Activated T-helper 2 cell treated with anti-CD3 and anti-CD28 coated beads, Interferon-gamma antibody, Interleukin-2, Interleukin-4, amounts not matched to agents 10 μg/mL and 5 μg/mL and 100 μg/mL, durations not matched to agents 14 hours and 24 hours and 36 hours (primary cell): ENCODE measurements at regions of chr3 and their contacts with region 1.

Region 1: DNA sequence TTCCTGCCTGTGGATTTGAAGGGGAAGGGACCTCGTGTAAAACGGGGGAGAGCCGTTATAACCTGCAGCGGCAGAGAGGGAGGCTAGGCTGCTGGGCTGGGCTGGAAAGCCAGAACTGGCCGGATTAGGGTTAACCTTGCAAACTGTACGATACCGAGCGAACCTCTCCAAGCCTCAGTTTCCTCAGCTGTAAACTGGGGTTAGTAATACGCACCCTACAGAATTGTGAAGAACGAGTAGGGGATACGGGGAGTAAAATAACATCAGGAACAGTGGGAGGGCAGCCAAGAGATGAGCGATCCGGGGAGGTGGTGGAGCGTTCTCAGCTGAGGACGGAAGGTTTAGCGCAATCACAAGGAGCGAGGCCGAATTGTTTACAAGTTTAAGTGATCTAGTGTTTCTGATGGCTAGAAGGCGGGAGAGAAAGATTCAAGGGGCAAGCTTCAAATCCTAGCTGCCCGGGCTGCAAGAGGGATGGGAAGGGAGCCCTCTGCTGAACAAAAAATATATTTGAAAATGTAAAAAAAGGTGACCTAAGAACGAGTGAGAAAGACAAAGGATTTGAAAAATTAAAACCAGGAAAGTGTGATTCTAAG is 768 bp upstream of the SEMA5B start:
- DNase-seq: no peak
- H3K4me3 Mint-ChIP-seq: peak overlapping the region; percentile 59
- H3K27ac Mint-ChIP-seq: no peak overlapping the region
- H3K4me1 Mint-ChIP-seq: peaks cover 11% of the 10 kb centered on the region
- H3K27me3 Mint-ChIP-seq: peaks cover 53% of the 10 kb centered on the region

Region 2: GRCh38 chr3:122942937-122943827 is 85.1 kb before region 1 on chr3:
- intact Hi-C with region 1: loop called (anchors 2 kb)
- DNase-seq: peak; percentile 15
- H3K4me3 Mint-ChIP-seq: no peak overlapping the region
- H3K27ac Mint-ChIP-seq: no peak overlapping the region
- H3K4me1 Mint-ChIP-seq: no peaks in the 10 kb centered on the region
- H3K27me3 Mint-ChIP-seq: peaks cover 10% of the 10 kb centered on the region